Cardiac septum (tissue), 1 donor: ENCODE measurements at regions of chr16 and their contacts with region 1.

Region 1: DNA sequence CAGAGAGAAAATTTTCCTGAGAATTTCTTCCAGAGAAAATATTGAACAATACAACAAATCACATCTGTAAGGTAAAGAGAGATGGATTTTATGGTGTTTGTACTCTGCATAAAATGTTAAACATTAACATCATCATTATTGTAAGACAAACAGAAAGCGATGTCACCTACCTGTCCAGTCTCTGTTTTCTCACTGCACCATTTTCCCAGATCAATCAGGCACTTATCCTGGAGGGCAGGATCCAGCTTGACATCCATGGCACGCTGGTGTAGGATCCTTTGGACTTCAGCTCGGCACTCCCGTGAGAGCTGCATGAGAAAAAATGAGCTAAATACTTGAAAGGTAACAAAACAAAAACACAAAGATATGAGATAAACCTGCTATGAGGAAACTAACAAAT is 55.9 kb upstream of the CLEC18B start:
- DNase-seq: no peak

Region 2: GRCh38 chr16:74611721-74612120 is 134.5 kb after region 1 on chr16:
- intact Hi-C with region 1: loop called (anchors 10 kb)
- DNase-seq: no peak

Region 3: DNA sequence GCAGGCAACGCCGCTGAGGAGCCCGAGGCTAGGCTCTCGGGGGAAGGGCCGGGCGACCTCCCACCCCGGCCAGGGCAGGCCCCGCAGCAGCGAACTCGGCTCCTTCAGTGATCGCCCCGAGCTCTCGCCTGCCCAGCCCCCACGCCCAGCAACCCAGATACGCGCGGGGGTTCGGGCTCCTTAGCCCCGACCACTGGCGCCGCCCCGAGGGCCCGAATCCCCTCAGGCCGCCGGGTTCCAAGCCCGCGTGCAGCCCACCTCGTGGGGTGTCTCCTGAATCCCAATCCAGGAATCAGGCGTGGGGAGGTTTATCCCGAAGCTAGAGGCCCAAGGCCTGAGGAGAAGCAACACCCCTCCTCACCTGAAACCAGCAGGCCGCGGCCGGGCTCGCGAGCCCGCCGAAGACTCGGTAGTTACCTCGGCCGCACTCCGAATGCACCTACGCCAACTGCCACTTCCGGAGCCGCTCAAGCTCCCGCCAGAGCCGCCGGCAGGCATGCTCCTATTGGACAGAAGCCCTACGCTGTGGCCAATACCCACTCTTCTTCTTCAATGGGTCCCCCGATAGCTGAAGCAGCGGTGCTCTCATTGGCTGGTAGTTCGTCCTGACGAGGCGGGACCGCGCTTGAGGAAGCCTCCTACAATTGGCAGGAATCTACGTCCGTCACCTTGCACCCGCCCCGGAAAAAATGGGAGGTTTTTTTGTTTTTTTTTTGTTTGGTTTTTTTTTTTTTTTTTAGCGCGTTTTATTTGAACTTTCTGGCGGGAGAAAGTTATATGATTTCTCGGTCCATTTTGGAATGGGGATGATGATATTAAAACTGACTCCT is 189.4 kb after region 1 on chr16 and contains the start of gene RFWD3:
- intact Hi-C with region 1: no loop called
- DNase-seq: peak; percentile 98
- total RNA-seq, gene RFWD3: 5.8 TPM